MCF 10A (cell line): ENCODE measurements at regions of chr2 and their contacts with region 1.

Region 1: DNA sequence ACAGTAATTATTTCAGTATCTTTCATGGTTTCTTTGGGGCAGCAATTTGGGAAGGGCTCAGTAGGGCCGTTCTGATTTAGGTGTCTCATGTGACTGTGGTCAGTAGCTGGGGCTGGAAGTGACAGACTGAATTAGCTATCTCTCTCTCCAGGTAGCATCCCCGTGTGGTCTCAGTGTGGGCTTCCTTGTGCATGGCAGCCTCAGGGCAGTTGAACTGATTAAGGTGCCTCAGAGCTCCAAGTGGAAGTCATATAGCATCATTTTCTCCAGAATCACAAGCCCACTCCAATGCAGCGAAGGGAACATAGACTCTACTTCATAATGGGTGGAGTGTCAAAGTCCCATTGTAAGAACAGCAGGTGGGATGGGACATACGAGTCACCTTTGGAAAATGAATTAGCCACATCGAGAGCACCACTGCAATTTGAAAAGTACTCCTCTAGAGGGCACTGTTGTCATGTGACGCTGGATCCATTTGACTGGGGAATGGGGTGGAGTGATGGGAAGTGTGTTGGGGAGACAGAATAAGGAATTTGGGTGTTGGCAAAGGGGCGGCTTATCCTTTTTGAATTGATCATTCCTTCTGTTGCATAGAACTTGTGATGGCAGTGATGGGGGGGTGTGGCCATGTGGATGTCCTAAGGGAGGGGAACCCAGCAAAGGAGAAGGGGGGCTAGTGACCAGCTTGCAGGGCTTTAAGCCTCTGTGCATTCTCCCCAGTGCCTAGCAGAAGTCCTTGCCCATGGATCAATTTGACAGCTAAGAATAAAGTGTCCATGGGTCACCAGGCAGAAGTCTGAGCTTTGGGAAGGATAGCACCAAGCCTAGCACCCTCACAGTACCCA is 39.3 kb upstream of the FAM136A start:
- DNase-seq: peak; percentile 82
- H3K4me3 Mint-ChIP-seq: no peak overlapping the region
- H3K27ac Mint-ChIP-seq: no peak overlapping the region
- H3K4me1 Mint-ChIP-seq: peaks cover 17% of the 10 kb centered on the region
- H3K27me3 Mint-ChIP-seq: no peaks in the 10 kb centered on the region
- CTCF ChIP-seq: peak; percentile 81

Region 2: DNA sequence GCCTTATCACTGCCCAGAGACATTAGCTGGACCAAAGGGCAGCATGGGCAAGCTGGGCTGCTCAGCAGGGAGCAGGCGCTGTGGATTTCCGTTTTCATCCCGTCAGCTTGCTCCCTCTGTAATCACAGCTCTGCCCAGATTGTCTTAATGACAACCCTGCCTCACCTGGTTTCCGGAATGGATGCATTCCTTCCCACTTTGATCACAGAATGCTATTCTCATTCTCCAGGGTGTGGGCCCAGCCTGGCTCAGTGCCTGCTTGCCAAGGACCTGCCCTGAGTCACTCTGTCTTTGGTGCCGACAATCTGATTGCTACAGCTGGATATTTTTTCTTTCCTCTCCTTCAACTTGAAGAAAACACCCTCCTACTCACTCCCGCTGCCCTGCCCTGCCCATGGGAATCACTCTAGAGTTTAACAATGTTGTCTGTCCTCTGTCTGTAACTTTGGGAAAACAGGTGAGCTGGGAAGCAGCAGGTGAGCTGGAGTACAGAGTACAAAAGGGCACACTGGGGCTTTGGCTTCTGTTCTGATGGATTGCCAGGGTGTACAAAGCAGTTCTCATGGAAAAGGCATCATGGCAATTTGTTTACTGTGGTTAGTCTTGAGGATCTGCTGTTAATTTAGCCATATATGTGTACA is 12.1 kb before region 1 on chr2:
- CTCF ChIA-PET with region 1: interaction called, 38 read pairs
- POLR2A ChIA-PET with region 1: interaction called, 3 read pairs
- intact Hi-C with region 1: no loop called
- DNase-seq: peak; percentile 92
- H3K4me3 Mint-ChIP-seq: peak overlapping the region; percentile 14
- H3K27ac Mint-ChIP-seq: peak overlapping the region; percentile 89
- H3K4me1 Mint-ChIP-seq: peaks cover 13% of the 10 kb centered on the region
- H3K27me3 Mint-ChIP-seq: no peaks in the 10 kb centered on the region
- CTCF ChIP-seq: no peak

Region 3: GRCh38 chr2:70354264-70354949 is 13.3 kb after region 1 on chr2:
- CTCF ChIA-PET with region 1: interaction called, 11 read pairs
- POLR2A ChIA-PET with region 1: no interaction called
- intact Hi-C with region 1: no loop called
- DNase-seq: peak; percentile 24
- H3K4me3 Mint-ChIP-seq: no peak overlapping the region
- H3K27ac Mint-ChIP-seq: peak overlapping the region; percentile 21
- H3K4me1 Mint-ChIP-seq: peaks cover 12% of the 10 kb centered on the region
- H3K27me3 Mint-ChIP-seq: no peaks in the 10 kb centered on the region
- CTCF ChIP-seq: no peak

Region 4: GRCh38 chr2:70456585-70457495 is 115.7 kb after region 1 on chr2:
- CTCF ChIA-PET with region 1: interaction called, 4 read pairs
- POLR2A ChIA-PET with region 1: interaction called, 4 read pairs
- intact Hi-C with region 1: loop called (anchors 10 kb)
- DNase-seq: no peak
- H3K4me3 Mint-ChIP-seq: no peak overlapping the region
- H3K27ac Mint-ChIP-seq: no peak overlapping the region
- H3K4me1 Mint-ChIP-seq: no peaks in the 10 kb centered on the region
- H3K27me3 Mint-ChIP-seq: no peaks in the 10 kb centered on the region
- CTCF ChIP-seq: no peak

Region 5: DNA sequence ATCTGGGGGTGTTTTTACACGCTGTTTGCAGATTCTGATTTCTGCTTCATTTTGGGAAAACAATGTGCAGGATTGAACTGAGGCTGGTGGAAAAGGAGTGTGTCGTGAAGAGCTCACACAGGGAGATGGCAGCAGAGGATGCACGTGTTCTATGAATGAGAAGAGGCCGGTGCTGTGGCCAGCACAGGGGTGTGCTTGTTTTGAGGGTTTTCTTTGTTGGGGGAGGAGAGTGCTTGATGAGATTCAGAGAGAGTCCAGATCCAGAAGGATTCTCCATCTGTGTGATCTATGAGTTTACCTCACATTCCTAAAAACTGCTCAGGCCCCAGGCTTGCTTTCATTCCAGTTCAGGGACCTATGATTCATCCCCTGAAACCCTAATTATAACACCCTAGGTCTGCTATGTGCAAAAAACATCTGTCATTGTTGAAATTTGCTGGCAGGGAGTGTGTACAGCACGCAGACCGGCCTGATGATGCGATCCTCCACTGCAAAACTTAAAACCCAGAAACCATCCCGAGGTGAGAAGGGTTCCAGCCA is 200.4 kb after region 1 on chr2:
- CTCF ChIA-PET with region 1: interaction called, 5 read pairs
- POLR2A ChIA-PET with region 1: no interaction called
- intact Hi-C with region 1: loop called (anchors 1 kb)
- DNase-seq: peak; percentile 87
- H3K4me3 Mint-ChIP-seq: peak overlapping the region; percentile 56
- H3K27ac Mint-ChIP-seq: peak overlapping the region; percentile 76
- H3K4me1 Mint-ChIP-seq: peaks cover 24% of the 10 kb centered on the region
- H3K27me3 Mint-ChIP-seq: no peaks in the 10 kb centered on the region
- CTCF ChIP-seq: peak; percentile 19

Region 6: GRCh38 chr2:70647873-70648481 is 306.8 kb after region 1 on chr2:
- CTCF ChIA-PET with region 1: interaction called, 71 read pairs
- POLR2A ChIA-PET with region 1: interaction called, 3 read pairs
- intact Hi-C with region 1: loop called (anchors 1 kb)
- DNase-seq: peak; percentile 67
- H3K4me3 Mint-ChIP-seq: no peak overlapping the region
- H3K27ac Mint-ChIP-seq: no peak overlapping the region
- H3K4me1 Mint-ChIP-seq: no peaks in the 10 kb centered on the region
- H3K27me3 Mint-ChIP-seq: peaks cover 23% of the 10 kb centered on the region
- CTCF ChIP-seq: peak; percentile 96